ENCODE measurements at regions of chr20 and their contacts with region 1.

Region 1: DNA sequence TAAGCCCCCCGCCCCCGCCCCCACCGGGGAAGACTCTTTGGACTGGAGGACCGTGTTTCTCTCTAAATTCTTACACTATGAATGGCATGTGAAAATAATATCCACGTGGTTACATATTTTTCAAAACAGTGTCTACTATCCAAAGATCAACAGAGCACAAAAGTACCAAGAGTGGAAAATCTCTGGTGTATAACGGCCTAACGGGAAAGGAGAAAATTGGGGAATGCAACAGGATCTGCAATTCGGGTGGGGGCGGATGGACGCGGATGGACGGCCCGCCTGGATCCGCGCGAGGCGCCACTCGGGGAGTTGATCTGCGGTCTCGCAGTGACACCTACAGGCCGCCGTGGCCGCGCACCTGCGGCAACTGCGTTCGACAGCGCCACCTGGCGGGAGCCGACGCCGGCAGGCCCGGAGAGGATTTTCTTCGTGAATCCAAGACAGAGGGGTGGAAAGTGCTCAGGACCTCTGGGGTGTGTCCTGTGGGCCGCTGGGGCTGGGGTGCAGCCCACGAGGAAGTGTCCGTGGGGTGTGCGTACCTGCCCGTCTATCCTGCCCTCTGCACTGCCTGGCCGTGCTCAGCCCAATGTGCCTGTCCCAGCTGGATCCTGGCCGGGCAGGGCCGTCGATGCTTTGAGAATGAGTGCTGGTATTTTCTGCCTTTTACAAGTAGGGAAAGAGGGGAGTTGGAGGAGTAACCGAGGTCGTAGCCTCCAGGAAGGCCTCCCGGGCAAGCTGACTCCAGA is 18.6 kb downstream of the ANKRD60 start:
- DNase-seq: peak; percentile 97
- H3K4me3 ChIP-seq: no peak overlapping the region
- H3K27ac ChIP-seq: no peak overlapping the region
- H3K4me1 ChIP-seq: peaks cover 0 to 11% (median 5%) of the 10 kb centered on the region in 6 donors
- H3K27me3 ChIP-seq: peaks cover 0 to 35% (median 11%) of the 10 kb centered on the region in 7 donors
- CTCF ChIP-seq: peak; percentile 98 to 100 (median 100)
- POLR2A ChIP-seq: no peak

Region 2: GRCh38 chr20:57514273-57514751 is 695.5 kb before region 1 on chr20:
- intact Hi-C with region 1: loop called (anchors 5 kb)
- DNase-seq: no peak
- H3K4me3 ChIP-seq: no peak overlapping the region
- H3K27ac ChIP-seq: no peak overlapping the region
- H3K4me1 ChIP-seq: peaks cover 0 to 8% (median 3%) of the 10 kb centered on the region in 6 donors
- H3K27me3 ChIP-seq: peaks cover 0 to 7% (median 0%) of the 10 kb centered on the region in 7 donors
- CTCF ChIP-seq: peak; percentile 34 to 76 (median 66)
- POLR2A ChIP-seq: no peak

Region 3: DNA sequence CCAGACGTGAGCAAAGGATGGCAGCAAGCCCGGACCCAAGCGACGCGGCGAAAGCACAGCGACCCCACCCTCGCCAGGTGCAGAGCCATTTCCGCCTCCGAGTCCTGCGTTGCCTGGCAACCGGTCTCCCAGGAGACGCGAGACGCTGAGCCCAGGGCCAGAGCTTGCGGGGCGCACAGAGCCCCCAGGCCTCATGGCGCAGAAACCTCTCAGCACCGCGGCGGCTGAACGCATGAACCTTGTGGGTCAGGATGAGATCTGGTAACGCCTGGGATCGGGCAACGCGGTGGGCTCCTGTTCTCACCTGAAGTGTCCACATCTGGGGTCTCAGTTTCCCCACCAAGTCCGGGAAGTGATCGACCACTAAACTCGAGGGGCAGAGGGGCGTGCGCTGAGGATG is 59.1 kb before region 1 on chr20:
- intact Hi-C with region 1: no loop called
- DNase-seq: no peak
- H3K4me3 ChIP-seq: no peak overlapping the region
- H3K27ac ChIP-seq: no peak overlapping the region
- H3K4me1 ChIP-seq: no peaks in the 10 kb centered on the region
- H3K27me3 ChIP-seq: peaks cover 0 to 71% (median 3%) of the 10 kb centered on the region in 7 donors
- CTCF ChIP-seq: no peak
- POLR2A ChIP-seq: no peak